ENCODE measurements at regions of chr3 and their contacts with region 1.

Region 1: GRCh38 chr3:4751502-4752101 is 227.6 kb upstream of the BHLHE40 start:
- DNase-seq: no peak
- H3K4me3 Mint-ChIP-seq: no peak overlapping the region
- H3K27ac Mint-ChIP-seq: no peak overlapping the region
- H3K4me1 Mint-ChIP-seq: peaks cover 64% of the 10 kb centered on the region
- H3K27me3 Mint-ChIP-seq: no peaks in the 10 kb centered on the region

Region 2: DNA sequence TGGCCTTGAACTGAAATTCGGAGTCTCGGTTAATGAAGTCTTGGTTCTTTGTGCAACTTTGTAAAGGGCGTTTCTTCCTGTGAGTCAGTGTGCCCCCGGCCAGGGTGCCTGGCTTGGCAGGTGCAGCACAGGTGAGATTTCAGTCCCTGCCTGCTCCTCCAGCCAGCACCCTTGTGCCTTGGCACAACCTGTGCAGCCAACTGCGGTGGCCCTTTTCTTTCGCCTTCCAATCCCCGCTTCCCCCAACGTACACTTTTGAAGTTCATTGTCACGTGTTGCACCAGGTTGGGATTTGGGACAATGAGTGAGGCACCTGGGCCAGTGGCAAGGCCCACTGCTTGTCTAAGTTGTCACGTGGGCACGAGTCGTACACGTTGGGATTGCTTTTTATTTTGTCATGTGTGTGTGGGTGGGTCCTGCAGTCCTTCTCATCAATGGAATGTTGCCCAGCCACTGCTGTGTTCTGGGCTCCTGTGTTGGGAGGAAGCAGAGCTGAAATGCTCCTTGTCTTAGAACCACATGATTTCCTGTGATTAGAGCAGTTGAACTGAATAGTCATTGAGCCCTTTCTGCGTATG is 15.2 kb before region 1 on chr3:
- CTCF ChIA-PET with region 1: interaction called, 11 read pairs
- POLR2A ChIA-PET with region 1: no interaction called
- DNase-seq: no peak
- H3K4me3 Mint-ChIP-seq: no peak overlapping the region
- H3K27ac Mint-ChIP-seq: peak overlapping the region; percentile 81
- H3K4me1 Mint-ChIP-seq: peaks cover 89% of the 10 kb centered on the region
- H3K27me3 Mint-ChIP-seq: no peaks in the 10 kb centered on the region

Region 3: GRCh38 chr3:4817128-4817527 is 65.5 kb after region 1 on chr3:
- CTCF ChIA-PET with region 1: no interaction called
- POLR2A ChIA-PET with region 1: no interaction called
- DNase-seq: no peak
- H3K4me3 Mint-ChIP-seq: no peak overlapping the region
- H3K27ac Mint-ChIP-seq: no peak overlapping the region
- H3K4me1 Mint-ChIP-seq: peaks cover 27% of the 10 kb centered on the region
- H3K27me3 Mint-ChIP-seq: no peaks in the 10 kb centered on the region